ENCODE measurements at regions of chr10 and their contacts with region 1.

Region 1: DNA sequence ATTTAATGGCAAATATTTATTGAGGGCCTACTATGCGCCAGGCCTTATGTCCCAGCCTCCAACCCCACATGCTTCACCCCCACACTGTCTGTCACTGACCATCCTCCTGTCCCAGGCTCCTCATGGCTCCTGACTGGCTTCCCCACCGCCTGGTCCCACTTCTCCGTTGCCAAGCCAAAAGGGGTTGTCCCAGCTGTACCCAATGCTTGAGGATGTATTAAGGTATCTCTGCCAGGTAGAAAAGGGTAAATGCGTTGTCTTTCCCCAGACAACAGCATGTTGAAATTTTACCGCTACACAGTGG is 168.8 kb upstream of the FRMD4A start:
- DNase-seq: no peak
- ATAC-seq: no peak
- H3K4me3 ChIP-seq: no peak overlapping the region
- H3K27ac ChIP-seq: no peak overlapping the region
- H3K4me1 ChIP-seq: no peaks in the 10 kb centered on the region
- H3K27me3 ChIP-seq: peaks cover 0 to 2% (median 0%) of the 10 kb centered on the region in 3 donors
- CTCF ChIP-seq: no peak
- POLR2A ChIP-seq: no peak

Region 2: GRCh38 chr10:14439451-14440259 is 59.9 kb before region 1 on chr10:
- in situ Hi-C with region 1: no loop called
- intact Hi-C with region 1: no loop called
- DNase-seq: no peak
- ATAC-seq: no peak
- H3K4me3 ChIP-seq: no peak overlapping the region
- H3K27ac ChIP-seq: no peak overlapping the region
- H3K4me1 ChIP-seq: no peaks in the 10 kb centered on the region
- H3K27me3 ChIP-seq: no peaks in the 10 kb centered on the region
- CTCF ChIP-seq: no peak
- POLR2A ChIP-seq: no peak

Region 3: GRCh38 chr10:14543046-14543903 is 43.7 kb after region 1 on chr10:
- in situ Hi-C with region 1: no loop called
- intact Hi-C with region 1: loop called (anchors 2 kb)
- DNase-seq: no peak
- ATAC-seq: no peak
- H3K4me3 ChIP-seq: no peak overlapping the region
- H3K27ac ChIP-seq: peak overlapping the region in 1 of 4 donors; percentile 21
- H3K4me1 ChIP-seq: no peaks in the 10 kb centered on the region
- H3K27me3 ChIP-seq: no peaks in the 10 kb centered on the region
- CTCF ChIP-seq: peak in 2 of 5 experiments; percentile 13 to 22
- POLR2A ChIP-seq: no peak